Testis (tissue), 5 donors: ENCODE measurements at regions of chr2 and their contacts with region 1.

Region 1: GRCh38 chr2:162126111-162126519 is 25.9 kb downstream of the GCG start:
- DNase-seq: no peak
- H3K4me3 ChIP-seq: no peak overlapping the region
- H3K27ac ChIP-seq: no peak overlapping the region
- H3K4me1 ChIP-seq: no peaks in the 10 kb centered on the region
- H3K27me3 ChIP-seq: no peaks in the 10 kb centered on the region
- CTCF ChIP-seq: no peak
- POLR2A ChIP-seq: no peak

Region 2: DNA sequence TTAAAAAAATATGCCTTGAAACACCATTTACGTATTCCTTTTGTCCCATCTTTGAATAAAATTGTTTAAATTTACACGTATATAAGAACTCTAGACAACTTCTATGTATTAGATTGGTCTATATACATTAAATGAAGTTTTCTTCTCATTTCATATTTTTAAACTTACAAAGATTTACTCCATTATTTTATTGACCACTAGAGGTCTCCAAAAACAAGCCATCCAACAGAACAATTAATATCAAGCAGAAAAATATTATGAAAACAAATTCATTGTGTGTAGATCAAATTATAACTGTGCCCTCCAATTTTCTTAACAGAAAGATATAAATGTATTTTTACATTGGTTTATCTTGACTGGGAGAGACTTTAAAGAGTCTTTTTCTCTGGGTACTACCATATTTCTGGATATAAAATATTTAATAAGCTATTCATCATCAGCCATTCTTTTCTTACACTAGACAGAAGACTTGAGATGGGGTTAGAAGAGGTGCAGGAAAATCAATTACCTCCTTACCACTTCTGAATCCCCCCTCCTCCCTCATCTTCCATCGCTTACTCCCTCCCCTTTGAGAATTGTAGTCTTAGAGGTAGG is 118.6 kb before region 1 on chr2:
- intact Hi-C with region 1: loop called (anchors 5 kb)
- DNase-seq: no peak
- H3K4me3 ChIP-seq: no peak overlapping the region
- H3K27ac ChIP-seq: no peak overlapping the region
- H3K4me1 ChIP-seq: peaks cover 3% of the 10 kb centered on the region
- H3K27me3 ChIP-seq: no peaks in the 10 kb centered on the region
- CTCF ChIP-seq: peak in 2 of 3 experiments; percentile 15 to 77
- POLR2A ChIP-seq: no peak